Heart left ventricle (tissue), 16 donors: ENCODE measurements at regions of chr17 and their contacts with region 1.

Region 1: DNA sequence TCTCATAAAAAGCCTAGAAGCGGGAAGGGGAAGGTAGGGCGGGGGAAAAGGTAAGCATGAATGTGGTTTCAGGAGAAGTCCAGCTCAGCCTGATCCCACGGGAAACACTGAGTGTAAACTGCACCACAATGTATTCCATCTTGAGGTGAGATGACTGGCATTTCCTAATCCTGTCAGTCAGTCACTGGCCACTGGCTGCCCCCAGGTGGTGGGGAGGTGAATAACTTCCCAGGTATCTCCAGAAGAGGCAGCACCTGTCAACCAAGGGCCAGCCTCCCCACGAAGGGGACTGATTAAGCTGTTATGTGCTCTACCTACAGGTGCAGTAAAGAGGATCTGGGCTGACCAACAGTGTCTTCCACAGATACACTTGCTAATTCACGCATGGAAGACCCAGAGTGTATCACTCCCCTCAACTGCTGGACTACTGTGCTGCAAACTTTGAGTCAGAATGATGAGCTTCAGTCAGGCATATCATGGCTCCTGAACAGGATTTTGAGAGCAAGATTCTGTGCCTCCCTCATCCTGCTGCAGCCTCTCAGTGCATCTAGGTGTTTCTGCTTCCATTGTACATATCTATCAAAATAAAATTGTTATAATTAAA is 108.5 kb upstream of the CCL2 start:
- DNase-seq: peak in 4 of 5 donors; percentile 25 to 65 (median 52)
- ATAC-seq: peak in 3 of 4 donors; percentile 46 to 74 (median 53)
- H3K4me3 ChIP-seq: no peak overlapping the region
- H3K27ac ChIP-seq: no peak overlapping the region
- H3K4me1 ChIP-seq: no peaks in the 10 kb centered on the region
- H3K27me3 ChIP-seq: peaks cover 0 to 42% (median 6%) of the 10 kb centered on the region in 9 donors
- CTCF ChIP-seq: peak; percentile 33 to 68 (median 48)
- POLR2A ChIP-seq: no peak

Region 2: GRCh38 chr17:33779225-33779591 is 367.3 kb before region 1 on chr17:
- intact Hi-C with region 1: loop called in 8 of 10 experiments (anchors 5 to 10 kb)
- DNase-seq: peak in 2 of 5 donors; percentile 30 to 31
- ATAC-seq: peak in 1 of 4 donors; percentile 28
- H3K4me3 ChIP-seq: no peak overlapping the region
- H3K27ac ChIP-seq: no peak overlapping the region
- H3K4me1 ChIP-seq: no peaks in the 10 kb centered on the region
- H3K27me3 ChIP-seq: peaks cover 0 to 34% (median 0%) of the 10 kb centered on the region in 9 donors
- CTCF ChIP-seq: peak; percentile 91 to 98 (median 95)
- POLR2A ChIP-seq: no peak

Region 3: GRCh38 chr17:33927732-33928133 is 218.8 kb before region 1 on chr17:
- intact Hi-C with region 1: loop called in 9 of 10 experiments (anchors 1 to 10 kb)
- DNase-seq: no peak
- ATAC-seq: no peak
- H3K4me3 ChIP-seq: no peak overlapping the region
- H3K27ac ChIP-seq: no peak overlapping the region
- H3K4me1 ChIP-seq: no peaks in the 10 kb centered on the region
- H3K27me3 ChIP-seq: peaks cover 0 to 40% (median 0%) of the 10 kb centered on the region in 9 donors
- CTCF ChIP-seq: peak in 11 of 12 donors; percentile 9 to 55 (median 42)
- POLR2A ChIP-seq: no peak

Region 4: DNA sequence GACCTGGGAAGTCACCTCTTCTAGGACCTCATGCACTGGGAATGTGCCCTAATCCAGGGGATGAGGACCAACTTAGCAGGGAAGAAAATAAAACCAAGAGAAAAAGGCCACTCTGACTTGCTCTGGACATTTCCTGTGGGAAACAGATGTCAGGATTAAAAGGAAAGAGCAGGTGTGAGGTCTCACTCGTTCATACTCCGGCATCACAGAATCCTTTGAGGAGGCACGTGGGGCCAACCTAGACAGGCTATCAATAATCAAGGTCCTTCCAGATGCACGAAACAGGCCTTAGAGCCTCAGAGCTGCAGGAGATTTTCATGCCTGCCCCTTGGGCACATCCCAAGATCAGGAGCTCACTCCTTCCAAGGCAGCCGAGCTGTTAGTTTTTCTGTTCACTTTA is 213.0 kb before region 1 on chr17:
- intact Hi-C with region 1: loop called in 9 of 10 experiments (anchors 1 to 10 kb)
- DNase-seq: no peak
- ATAC-seq: no peak
- H3K4me3 ChIP-seq: no peak overlapping the region
- H3K27ac ChIP-seq: no peak overlapping the region
- H3K4me1 ChIP-seq: no peaks in the 10 kb centered on the region
- H3K27me3 ChIP-seq: peaks cover 0 to 22% (median 0%) of the 10 kb centered on the region in 9 donors
- CTCF ChIP-seq: no peak
- POLR2A ChIP-seq: no peak

Region 5: GRCh38 chr17:34081269-34081668 is 65.3 kb before region 1 on chr17:
- intact Hi-C with region 1: loop called in 4 of 10 experiments (anchors 5 to 10 kb)
- DNase-seq: no peak
- ATAC-seq: no peak
- H3K4me3 ChIP-seq: no peak overlapping the region
- H3K27ac ChIP-seq: no peak overlapping the region
- H3K4me1 ChIP-seq: no peaks in the 10 kb centered on the region
- H3K27me3 ChIP-seq: peaks cover 0 to 23% (median 3%) of the 10 kb centered on the region in 9 donors
- CTCF ChIP-seq: peak in 9 of 12 donors; percentile 11 to 41 (median 26)
- POLR2A ChIP-seq: no peak

Region 6: DNA sequence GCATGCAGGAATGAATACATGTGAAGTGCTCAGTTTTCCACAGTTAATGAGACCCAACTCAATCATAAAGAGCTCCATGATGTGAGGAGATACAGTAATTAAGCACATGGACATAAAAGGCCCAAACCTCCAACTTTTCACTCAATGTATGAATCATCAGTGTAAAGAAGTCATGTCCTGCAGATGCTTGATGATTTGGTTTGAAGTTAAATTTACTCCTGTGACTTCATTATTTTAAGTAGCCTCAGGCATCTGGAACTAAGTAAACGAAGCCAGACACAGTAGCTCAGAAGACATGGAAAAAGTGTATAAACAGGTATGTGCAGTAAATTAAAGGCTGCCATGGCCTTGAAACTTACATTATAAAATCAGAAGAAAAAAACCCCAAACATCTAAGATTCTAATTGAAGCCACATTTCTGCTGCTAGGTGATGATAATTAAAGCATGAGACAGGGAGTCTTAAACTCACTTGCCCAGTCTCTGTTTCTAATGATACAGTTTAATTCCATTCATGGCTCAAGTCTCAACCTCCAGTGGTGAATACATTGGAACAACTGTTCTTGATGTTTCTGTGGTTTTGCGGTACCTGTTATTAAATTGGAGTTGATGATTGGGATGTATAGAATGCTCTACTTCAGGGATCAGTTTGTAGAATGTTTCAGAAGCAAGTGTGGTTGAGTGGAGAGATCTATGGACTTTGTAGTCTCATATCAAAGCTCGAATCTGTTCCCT is 79.6 kb after region 1 on chr17:
- intact Hi-C with region 1: no loop called
- DNase-seq: no peak
- ATAC-seq: no peak
- H3K4me3 ChIP-seq: no peak overlapping the region
- H3K27ac ChIP-seq: no peak overlapping the region
- H3K4me1 ChIP-seq: peaks cover 0 to 24% (median 0%) of the 10 kb centered on the region in 12 donors
- H3K27me3 ChIP-seq: no peaks in the 10 kb centered on the region
- CTCF ChIP-seq: no peak
- POLR2A ChIP-seq: no peak

Region 7: GRCh38 chr17:34275881-34276280 is 129.3 kb after region 1 on chr17:
- intact Hi-C with region 1: no loop called
- DNase-seq: no peak
- ATAC-seq: no peak
- H3K4me3 ChIP-seq: no peak overlapping the region
- H3K27ac ChIP-seq: no peak overlapping the region
- H3K4me1 ChIP-seq: peaks cover 0 to 12% (median 0%) of the 10 kb centered on the region in 12 donors
- H3K27me3 ChIP-seq: peaks cover 0 to 4% (median 0%) of the 10 kb centered on the region in 9 donors
- CTCF ChIP-seq: no peak
- POLR2A ChIP-seq: no peak